ENCODE measurements at regions of chr2 and their contacts with region 1.

Region 1: DNA sequence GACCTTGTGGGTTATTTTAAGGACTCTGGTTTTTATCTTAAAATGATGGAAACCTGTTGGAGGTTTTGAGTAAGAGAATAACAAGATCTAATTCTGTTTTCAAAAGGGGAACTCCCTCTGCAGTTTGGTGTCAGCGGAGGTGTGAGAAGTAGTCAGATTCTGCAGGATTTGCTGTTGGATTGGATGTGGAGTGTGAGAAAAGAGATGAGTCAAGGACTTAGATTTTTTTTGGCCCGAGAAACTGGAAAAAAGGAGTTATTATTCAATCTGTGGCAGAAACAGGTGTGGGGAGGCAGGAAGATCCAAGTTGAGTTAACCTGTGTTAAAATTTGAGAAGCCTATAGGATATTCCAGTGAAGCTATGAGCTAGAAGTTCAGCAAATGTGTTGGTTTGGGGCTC is 337.2 kb upstream of the FANCL start:
- DNase-seq: no peak
- H3K4me3 ChIP-seq: no peak overlapping the region
- H3K27ac ChIP-seq: no peak overlapping the region
- H3K4me1 ChIP-seq: peaks cover 0 to 2% (median under 1%) of the 10 kb centered on the region in 4 experiments; a peak in 1 of 7 replicates
- H3K27me3 ChIP-seq: no peaks in the 10 kb centered on the region
- CTCF ChIP-seq: no peak
- EP300 ChIP-seq: no peak
- POLR2A ChIP-seq: no peak
- RAD21 ChIP-seq: no peak

Region 2: DNA sequence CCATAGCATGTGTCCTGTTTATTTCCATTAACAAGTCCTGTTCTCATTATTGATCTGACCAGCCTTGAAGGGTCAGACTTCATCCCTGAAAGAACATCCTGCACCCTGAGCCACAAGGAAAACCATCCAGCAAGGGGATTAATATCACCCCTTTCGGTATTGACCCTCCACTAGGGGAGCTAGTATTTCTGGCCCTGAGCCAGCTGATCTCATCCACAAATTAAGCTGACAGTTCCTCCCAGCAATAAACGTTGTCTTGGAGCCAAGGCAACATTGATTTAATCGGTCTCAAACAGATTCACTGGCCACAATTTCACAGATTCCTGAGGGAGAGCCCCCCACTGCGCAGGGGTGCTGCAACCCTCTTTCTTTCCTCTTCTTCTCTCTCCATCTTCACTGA is 15.9 kb after region 1 on chr2:
- CTCF ChIA-PET with region 1: interaction called, 11 read pairs
- POLR2A ChIA-PET with region 1: no interaction called
- DNase-seq: no peak
- H3K4me3 ChIP-seq: no peak overlapping the region
- H3K27ac ChIP-seq: no peak overlapping the region
- H3K4me1 ChIP-seq: peaks cover 0 to 4% (median 0%) of the 10 kb centered on the region in 4 experiments; a peak in 1 of 7 replicates
- H3K27me3 ChIP-seq: no peaks in the 10 kb centered on the region
- CTCF ChIP-seq: peak; percentile 6 to 71 (median 30)
- EP300 ChIP-seq: no peak
- POLR2A ChIP-seq: no peak
- RAD21 ChIP-seq: peak; percentile 35 to 42

Measured in H1 (cell line).